Ovary (tissue), 10 donors: ENCODE measurements at regions of chr18 and their contacts with region 1.

Region 1: GRCh38 chr18:9136315-9137155 is at the start of gene ANKRD12:
- DNase-seq: peak; percentile 94 to 97 (median 96)
- H3K4me3 ChIP-seq: peak within 1 kb of the TSS; percentile 91
- H3K27ac ChIP-seq: peak within 1 kb of the TSS; percentile 99
- H3K4me1 ChIP-seq: no peaks in the 10 kb centered on the region
- H3K27me3 ChIP-seq: no peaks in the 10 kb centered on the region
- CTCF ChIP-seq: no peak
- EP300 ChIP-seq: no peak
- POLR2A ChIP-seq: peak; percentile 91
- total RNA-seq, gene ANKRD12: 27.0 to 115 (median 76.4) TPM

Region 2: GRCh38 chr18:9102508-9103375 is 33.8 kb before region 1 on chr18 and contains the start of gene NDUFV2:
- intact Hi-C with region 1: loop called in 2 of 4 experiments (anchors 2 to 5 kb)
- DNase-seq: peak; percentile 96 to 98 (median 97)
- H3K4me3 ChIP-seq: peak within 1 kb of the TSS; percentile 64
- H3K27ac ChIP-seq: peak within 1 kb of the TSS; percentile 64 to 83
- H3K4me1 ChIP-seq: peaks cover 6% of the 10 kb centered on the region
- H3K27me3 ChIP-seq: no peaks in the 10 kb centered on the region
- CTCF ChIP-seq: no peak
- EP300 ChIP-seq: no peak
- POLR2A ChIP-seq: peak; percentile 83
- total RNA-seq, gene NDUFV2: 59.7 to 86.0 (median 65.5) TPM